Activated T-helper 2 cell treated with anti-CD3 and anti-CD28 coated beads, Interferon-gamma antibody, Interleukin-2, Interleukin-4, amounts not matched to agents 10 μg/mL and 5 μg/mL and 100 μg/mL, durations not matched to agents 14 hours and 24 hours and 36 hours (primary cell): ENCODE measurements at regions of chr10 and their contacts with region 1.

Region 1: GRCh38 chr10:117545141-117546019 is 2.8 kb downstream of the EMX2 start:
- DNase-seq: no peak
- H3K4me3 Mint-ChIP-seq: no peak overlapping the region
- H3K27ac Mint-ChIP-seq: peak overlapping the region; percentile 22
- H3K4me1 Mint-ChIP-seq: peaks cover 4% of the 10 kb centered on the region
- H3K27me3 Mint-ChIP-seq: peaks cover 79% of the 10 kb centered on the region

Region 2: GRCh38 chr10:116272440-116273283 is 1272.7 kb before region 1 on chr10 and contains the start of gene GFRA1:
- intact Hi-C with region 1: loop called (anchors 5 kb)
- DNase-seq: no peak
- H3K4me3 Mint-ChIP-seq: no peak within 1 kb of the TSS
- H3K27ac Mint-ChIP-seq: no peak within 1 kb of the TSS
- H3K4me1 Mint-ChIP-seq: peaks cover 6% of the 10 kb centered on the region
- H3K27me3 Mint-ChIP-seq: peaks cover 66% of the 10 kb centered on the region
- total RNA-seq, gene GFRA1: not detected in 2 replicates

Region 3: DNA sequence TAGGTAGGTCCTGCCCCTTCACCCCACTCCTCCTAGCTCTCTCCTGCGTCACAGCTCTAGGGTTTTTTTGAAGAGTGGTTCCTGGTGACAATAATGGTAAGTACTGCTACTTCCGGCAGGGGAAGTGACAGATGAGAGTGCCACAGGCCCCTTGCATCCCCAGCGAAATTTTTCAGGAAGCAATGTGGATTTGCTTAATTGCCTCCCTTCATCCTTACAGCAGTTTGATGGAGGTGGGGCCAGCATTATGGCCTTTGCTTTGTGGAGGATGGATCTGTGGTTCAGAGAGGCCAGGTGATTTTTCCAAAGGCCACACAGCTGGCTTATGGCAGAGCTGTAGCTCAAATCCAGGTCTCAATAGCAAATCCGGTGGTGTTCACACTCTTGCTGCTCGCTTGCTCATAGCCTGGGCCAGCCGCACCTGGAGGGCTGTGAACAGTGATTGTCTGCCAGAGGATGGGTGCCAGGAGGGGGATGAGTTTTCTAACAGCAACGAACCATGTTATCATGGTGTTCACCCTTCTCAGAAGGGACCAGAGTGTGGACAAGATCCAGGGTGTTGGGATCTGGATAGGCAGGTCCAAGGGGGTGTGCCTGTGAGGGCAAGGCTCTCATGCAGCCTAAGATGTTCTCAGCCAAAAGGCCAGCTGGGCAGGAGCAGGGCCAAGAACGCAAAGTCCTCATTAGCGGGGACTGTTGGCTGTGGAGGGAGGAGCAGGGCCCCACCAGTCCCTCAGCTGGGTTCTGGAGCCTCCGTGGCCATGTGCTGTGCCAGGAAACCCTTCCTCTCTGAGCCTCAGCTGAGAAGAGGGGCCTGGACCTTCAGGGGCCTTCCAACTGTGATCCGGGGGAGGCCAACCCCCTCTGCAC is 86.1 kb after region 1 on chr10:
- intact Hi-C with region 1: no loop called
- DNase-seq: no peak
- H3K4me3 Mint-ChIP-seq: no peak overlapping the region
- H3K27ac Mint-ChIP-seq: no peak overlapping the region
- H3K4me1 Mint-ChIP-seq: no peaks in the 10 kb centered on the region
- H3K27me3 Mint-ChIP-seq: peaks cover 3% of the 10 kb centered on the region

Region 4: GRCh38 chr10:117782276-117782675 is 236.9 kb after region 1 on chr10:
- intact Hi-C with region 1: no loop called
- DNase-seq: no peak
- H3K4me3 Mint-ChIP-seq: no peak overlapping the region
- H3K27ac Mint-ChIP-seq: no peak overlapping the region
- H3K4me1 Mint-ChIP-seq: no peaks in the 10 kb centered on the region
- H3K27me3 Mint-ChIP-seq: peaks cover 2% of the 10 kb centered on the region